ENCODE measurements at regions of chr20 and their contacts with region 1.

Region 1: DNA sequence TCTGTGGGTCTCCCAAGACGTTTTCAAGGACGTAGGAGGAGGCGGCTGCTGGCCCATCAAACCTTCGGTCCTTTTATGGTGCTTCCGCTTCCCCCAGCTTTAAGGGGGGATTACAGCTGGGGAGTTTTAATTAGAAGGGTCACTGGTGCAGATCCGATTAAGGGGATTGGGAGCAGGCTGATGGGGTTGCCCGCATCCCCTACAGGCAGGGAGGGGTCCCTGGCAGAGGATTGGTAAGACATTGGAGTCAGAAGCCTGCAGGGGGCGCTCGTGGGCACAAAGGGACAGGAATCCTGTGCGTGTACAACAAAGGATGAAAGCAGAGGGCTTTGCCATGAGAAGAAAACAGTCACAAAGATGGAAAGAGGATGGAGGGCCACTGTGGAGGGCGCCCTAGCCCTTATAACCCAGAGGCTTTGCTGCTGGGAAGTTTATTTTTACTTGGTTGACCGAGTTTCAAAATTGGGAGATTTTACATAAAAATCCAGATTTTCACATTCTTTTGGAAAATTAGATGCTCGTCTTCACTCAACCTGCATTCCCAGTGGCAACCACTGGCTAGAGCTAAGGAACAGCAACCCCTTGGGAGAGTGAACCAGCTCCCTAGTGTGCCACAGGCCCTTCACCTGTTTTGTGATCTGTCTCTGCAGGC is 97.9 kb downstream of the KCNB1 start:
- DNase-seq: peak; percentile 60 to 88 (median 71)
- ATAC-seq: peak in 2 of 4 donors; percentile 42 to 46
- H3K4me3 ChIP-seq: no peak overlapping the region
- H3K27ac ChIP-seq: peak overlapping the region in 1 of 12 donors; percentile 20
- H3K4me1 ChIP-seq: peaks cover 0 to 32% (median 17%) of the 10 kb centered on the region in 12 donors
- H3K27me3 ChIP-seq: no peaks in the 10 kb centered on the region
- CTCF ChIP-seq: peak; percentile 49 to 80 (median 74)
- POLR2A ChIP-seq: no peak

Region 2: GRCh38 chr20:49446808-49447207 is 62.2 kb after region 1 on chr20:
- intact Hi-C with region 1: loop called in 2 of 10 experiments (anchors 5 to 10 kb)
- DNase-seq: peak; percentile 86 to 90 (median 87)
- ATAC-seq: peak; percentile 75 to 92 (median 78)
- H3K4me3 ChIP-seq: no peak overlapping the region
- H3K27ac ChIP-seq: peak overlapping the region; percentile 38 to 85 (median 54)
- H3K4me1 ChIP-seq: peaks cover 0 to 44% (median 26%) of the 10 kb centered on the region in 12 donors
- H3K27me3 ChIP-seq: peaks cover 0 to 15% (median 0%) of the 10 kb centered on the region in 9 donors
- CTCF ChIP-seq: peak in 6 of 12 donors; percentile 7 to 30 (median 16)
- POLR2A ChIP-seq: no peak

Region 3: GRCh38 chr20:49924247-49924646 is 539.7 kb after region 1 on chr20:
- intact Hi-C with region 1: no loop called
- DNase-seq: no peak
- ATAC-seq: no peak
- H3K4me3 ChIP-seq: no peak overlapping the region
- H3K27ac ChIP-seq: no peak overlapping the region
- H3K4me1 ChIP-seq: peaks cover 0 to 18% (median 1%) of the 10 kb centered on the region in 12 donors
- H3K27me3 ChIP-seq: no peaks in the 10 kb centered on the region
- CTCF ChIP-seq: no peak
- POLR2A ChIP-seq: no peak